ENCODE measurements at regions of chr1 and their contacts with region 1.

Region 1: GRCh38 chr1:157969697-157970485 is 23.6 kb upstream of the KIRREL1 start:
- DNase-seq: peak in 1 of 2 donors; percentile 64
- H3K4me3 ChIP-seq: no peak overlapping the region
- H3K27ac ChIP-seq: peak overlapping the region in 1 of 2 donors; percentile 27
- H3K4me1 ChIP-seq: peaks cover 0 to 14% (median 7%) of the 10 kb centered on the region in 4 donors
- H3K27me3 ChIP-seq: peaks cover 0 to 6% of the 10 kb centered on the region in 2 donors
- CTCF ChIP-seq: peak; percentile 57 to 72

Region 2: GRCh38 chr1:157894613-157895165 is 75.2 kb before region 1 on chr1:
- intact Hi-C with region 1: no loop called
- DNase-seq: no peak
- H3K4me3 ChIP-seq: no peak overlapping the region
- H3K27ac ChIP-seq: no peak overlapping the region
- H3K4me1 ChIP-seq: peaks cover 0 to 9% (median 0%) of the 10 kb centered on the region in 4 donors
- H3K27me3 ChIP-seq: no peaks in the 10 kb centered on the region
- CTCF ChIP-seq: no peak

Region 3: GRCh38 chr1:158067662-158068061 is 97.8 kb after region 1 on chr1:
- intact Hi-C with region 1: no loop called
- DNase-seq: peak in 1 of 2 donors; percentile 27
- H3K4me3 ChIP-seq: no peak overlapping the region
- H3K27ac ChIP-seq: peak overlapping the region; percentile 60
- H3K4me1 ChIP-seq: peaks cover 0 to 87% (median 55%) of the 10 kb centered on the region in 4 donors
- H3K27me3 ChIP-seq: no peaks in the 10 kb centered on the region
- CTCF ChIP-seq: no peak

Region 4: DNA sequence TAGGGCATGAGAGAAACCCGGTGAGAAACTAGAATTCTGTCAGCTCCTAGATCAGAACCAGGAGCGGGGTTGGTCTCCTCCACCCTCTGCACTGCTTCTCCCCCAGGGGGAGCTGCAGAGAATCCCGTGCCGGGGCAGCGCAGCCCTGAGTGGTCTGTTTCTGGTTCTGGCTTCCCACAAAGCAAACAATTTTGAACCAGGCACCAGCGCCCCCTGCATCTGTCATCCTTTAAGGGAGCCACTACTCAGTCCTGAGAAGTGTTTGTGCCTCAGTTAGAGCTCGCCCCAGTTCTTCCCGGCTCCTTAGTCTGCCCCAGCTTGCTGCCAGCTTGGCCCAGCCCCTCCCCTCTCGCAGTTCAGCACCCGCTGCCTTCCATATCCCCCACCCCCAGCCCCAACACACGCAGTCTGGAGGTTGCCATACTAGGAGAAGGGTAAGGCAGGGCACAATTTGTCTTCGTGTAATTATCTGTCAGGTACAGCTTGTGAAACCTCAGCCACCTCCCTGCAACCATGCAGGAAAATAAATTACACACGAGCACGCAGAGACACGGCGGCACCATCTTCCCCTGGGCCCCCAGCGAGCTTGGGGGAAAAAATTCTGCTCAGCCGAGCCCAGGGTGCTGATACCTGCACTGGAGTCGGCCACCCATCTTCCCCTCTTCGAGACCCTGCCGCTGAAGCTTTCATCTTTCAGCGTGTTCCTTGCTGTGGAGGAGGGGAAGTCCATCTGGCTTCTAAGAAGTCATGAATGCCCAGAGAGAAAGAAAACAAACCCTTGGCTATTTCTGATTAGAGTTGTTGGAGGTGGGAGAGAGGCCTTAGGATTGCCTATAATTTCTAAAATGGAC is 148.2 kb after region 1 on chr1:
- intact Hi-C with region 1: loop called (anchors 5 kb)
- DNase-seq: peak in 1 of 2 donors; percentile 50
- H3K4me3 ChIP-seq: peak overlapping the region; percentile 23 to 38
- H3K27ac ChIP-seq: no peak overlapping the region
- H3K4me1 ChIP-seq: peaks cover 0 to 19% (median 17%) of the 10 kb centered on the region in 4 donors
- H3K27me3 ChIP-seq: peaks cover 0 to 4% of the 10 kb centered on the region in 2 donors
- CTCF ChIP-seq: peak; percentile 44 to 55

Measured in tibial artery (tissue), 4 donors.